AG04449 (cell line): ENCODE measurements at regions of chr20 and their contacts with region 1.

Region 1: GRCh38 chr20:13819885-13820645 is 35.2 kb downstream of the NDUFAF5 start:
- DNase-seq: no peak
- H3K4me3 ChIP-seq: no peak overlapping the region
- CTCF ChIP-seq: peak; percentile 22

Region 2: DNA sequence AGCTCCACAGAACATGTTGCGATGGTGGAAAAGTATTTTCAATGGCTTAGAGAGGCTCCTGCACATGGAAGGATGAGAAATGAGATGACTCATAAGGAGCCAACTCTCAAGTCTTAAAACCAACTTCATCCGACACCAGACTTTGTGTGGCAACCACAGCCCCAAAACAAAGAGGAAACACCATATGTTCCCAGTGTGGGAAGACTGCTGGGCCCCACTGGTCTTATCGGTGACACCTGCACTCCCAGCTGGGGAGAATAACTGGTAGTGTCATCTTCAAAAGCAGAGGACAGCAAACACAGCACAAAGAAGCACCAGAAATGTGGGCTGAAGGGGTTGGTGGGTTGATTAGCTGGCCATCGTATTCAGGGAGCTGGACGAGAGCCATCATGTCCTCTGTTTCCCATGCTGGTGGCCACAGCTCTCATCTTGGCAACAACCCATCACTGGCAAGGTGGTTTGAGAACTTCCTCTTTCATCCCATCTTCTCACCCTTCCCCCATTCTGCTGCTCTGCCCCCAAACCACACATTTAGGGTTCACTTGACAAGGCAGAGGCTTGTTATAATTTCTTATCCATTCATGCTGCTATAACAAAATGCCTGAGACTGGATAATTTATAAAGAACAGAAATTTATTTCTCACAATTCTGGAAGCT is 135.4 kb before region 1 on chr20:
- CTCF ChIA-PET with region 1: no interaction called
- POLR2A ChIA-PET with region 1: no interaction called
- DNase-seq: no peak
- H3K4me3 ChIP-seq: no peak overlapping the region
- CTCF ChIP-seq: no peak

Region 3: DNA sequence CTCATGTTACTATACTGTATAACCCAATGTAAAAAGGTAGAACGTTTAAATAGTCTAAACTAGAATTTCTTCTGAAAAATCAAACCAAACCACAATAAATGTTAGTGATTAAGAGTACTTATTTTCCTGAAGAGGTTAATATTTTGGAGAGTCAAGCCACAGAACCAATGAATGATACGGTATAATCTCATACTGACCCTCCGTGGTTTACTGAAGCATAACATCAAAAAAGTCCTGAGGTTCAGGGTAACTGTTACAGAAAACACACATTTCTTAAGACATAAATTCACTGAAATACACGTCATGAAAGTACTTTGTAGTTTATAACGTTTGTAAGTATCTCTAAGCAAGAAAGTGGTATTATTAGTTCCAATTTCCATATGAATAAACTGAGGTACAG is 64.3 kb before region 1 on chr20:
- CTCF ChIA-PET with region 1: no interaction called
- POLR2A ChIA-PET with region 1: no interaction called
- DNase-seq: no peak
- H3K4me3 ChIP-seq: no peak overlapping the region
- CTCF ChIP-seq: no peak

Region 4: GRCh38 chr20:13800728-13801134 is 19.3 kb before region 1 on chr20:
- CTCF ChIA-PET with region 1: interaction called, 88 read pairs
- POLR2A ChIA-PET with region 1: no interaction called
- DNase-seq: peak; percentile 31
- H3K4me3 ChIP-seq: no peak overlapping the region
- CTCF ChIP-seq: no peak

Region 5: GRCh38 chr20:13809373-13809772 is 10.7 kb before region 1 on chr20:
- CTCF ChIA-PET with region 1: interaction called, 88 read pairs
- POLR2A ChIA-PET with region 1: interaction called, 4 read pairs
- DNase-seq: no peak
- H3K4me3 ChIP-seq: no peak overlapping the region
- CTCF ChIP-seq: no peak

Region 6: GRCh38 chr20:13831476-13831875 is 11.4 kb after region 1 on chr20:
- CTCF ChIA-PET with region 1: interaction called, 19 read pairs
- POLR2A ChIA-PET with region 1: no interaction called
- DNase-seq: no peak
- H3K4me3 ChIP-seq: no peak overlapping the region
- CTCF ChIP-seq: no peak

Region 7: DNA sequence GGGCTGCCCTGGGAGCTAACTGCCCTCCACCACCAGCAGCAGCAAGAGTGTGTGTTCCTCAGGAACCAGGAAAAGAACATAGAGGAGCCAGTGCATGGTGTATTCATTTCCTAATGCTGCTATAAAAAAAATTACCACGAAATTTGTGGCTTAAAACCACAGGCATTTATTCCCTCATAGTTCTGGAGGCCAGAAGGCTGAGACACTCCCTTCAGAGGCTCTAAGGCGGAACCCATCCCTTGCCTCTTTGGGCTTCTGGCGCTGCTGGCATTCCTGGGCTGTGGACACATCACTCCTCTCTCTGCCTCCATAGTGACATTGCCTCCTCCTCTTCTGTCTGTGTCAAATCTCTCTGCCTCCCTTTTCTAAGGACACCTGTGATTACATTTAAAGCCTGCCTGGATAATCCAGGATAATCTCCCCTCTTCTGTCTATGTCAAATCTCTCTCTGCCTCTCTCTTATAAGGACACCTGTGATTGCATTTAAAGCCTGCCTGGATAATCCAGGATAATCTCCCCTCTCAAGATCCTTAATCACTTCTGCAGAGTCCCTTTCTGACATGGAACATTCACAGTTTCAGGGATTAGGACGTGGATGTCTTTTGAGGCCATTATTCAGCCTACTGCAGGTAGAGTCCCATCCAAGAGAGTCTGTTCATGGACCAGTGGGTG is 19.5 kb after region 1 on chr20:
- CTCF ChIA-PET with region 1: interaction called, 17 read pairs
- POLR2A ChIA-PET with region 1: interaction called, 3 read pairs
- DNase-seq: peak; percentile 68
- H3K4me3 ChIP-seq: no peak overlapping the region
- CTCF ChIP-seq: no peak

Region 8: DNA sequence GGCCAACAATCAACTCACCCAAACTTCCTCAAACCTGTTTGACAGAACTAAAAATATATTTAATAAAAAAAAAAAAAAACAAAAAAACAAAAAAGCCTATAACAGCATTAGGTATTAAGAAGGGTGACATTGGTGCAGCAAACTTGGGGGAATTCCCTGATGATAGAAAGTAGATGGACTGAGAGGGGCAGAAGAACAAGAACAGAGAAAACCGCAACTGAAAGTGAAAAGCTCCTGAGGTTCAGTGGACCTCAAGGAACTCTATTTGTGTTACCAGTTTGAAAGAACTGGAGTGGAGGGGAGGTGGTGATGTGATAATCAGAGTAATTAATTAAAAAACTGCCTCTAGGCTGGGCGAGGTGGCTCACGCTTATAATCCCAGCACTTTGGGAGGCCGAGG is 229.0 kb after region 1 on chr20:
- CTCF ChIA-PET with region 1: interaction called, 127 read pairs
- POLR2A ChIA-PET with region 1: no interaction called
- DNase-seq: no peak
- H3K4me3 ChIP-seq: no peak overlapping the region
- CTCF ChIP-seq: no peak

Region 9: GRCh38 chr20:14055127-14055742 is 235.2 kb after region 1 on chr20:
- CTCF ChIA-PET with region 1: interaction called, 127 read pairs
- POLR2A ChIA-PET with region 1: no interaction called
- DNase-seq: peak; percentile 37
- H3K4me3 ChIP-seq: no peak overlapping the region
- CTCF ChIP-seq: peak; percentile 40